Psoas muscle (tissue), 8 donors: ENCODE measurements at regions of chr6 and their contacts with region 1.

Region 1: GRCh38 chr6:117317261-117317660 is 51.9 kb downstream of the VGLL2 start:
- DNase-seq: no peak
- ATAC-seq: peak in 3 of 4 donors; percentile 75 to 88 (median 79)
- H3K4me3 ChIP-seq: no peak overlapping the region
- H3K27ac ChIP-seq: no peak overlapping the region
- H3K4me1 ChIP-seq: peaks cover 4% of the 10 kb centered on the region
- H3K27me3 ChIP-seq: no peaks in the 10 kb centered on the region
- CTCF ChIP-seq: peak; percentile 65

Region 2: DNA sequence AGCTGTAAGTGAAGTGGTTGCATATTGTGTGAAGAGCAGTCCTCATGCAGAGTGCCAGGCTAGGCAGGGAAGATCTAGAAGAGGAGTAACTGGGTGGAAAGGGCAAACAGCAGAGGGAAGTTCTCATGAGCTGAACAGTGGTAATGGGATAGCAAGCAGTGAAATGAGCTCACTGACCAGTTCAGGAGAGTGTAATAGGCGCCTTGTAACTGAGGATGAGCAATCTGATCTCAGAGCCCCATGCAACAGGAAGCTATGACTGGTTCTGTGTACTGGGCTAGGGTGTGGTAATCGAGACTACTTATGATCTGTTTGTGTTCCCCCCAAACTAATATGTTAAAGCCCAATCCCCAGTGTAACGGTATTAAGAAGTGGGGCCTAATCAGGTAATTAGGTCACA is 341.7 kb before region 1 on chr6:
- intact Hi-C with region 1: loop called (anchors 2 to 5 kb)
- DNase-seq: no peak
- ATAC-seq: peak; percentile 90 to 95 (median 92)
- H3K4me3 ChIP-seq: no peak overlapping the region
- H3K27ac ChIP-seq: peak overlapping the region; percentile 86
- H3K4me1 ChIP-seq: peaks cover 30% of the 10 kb centered on the region
- H3K27me3 ChIP-seq: no peaks in the 10 kb centered on the region
- CTCF ChIP-seq: no peak

Region 3: GRCh38 chr6:117194978-117195377 is 122.3 kb before region 1 on chr6:
- intact Hi-C with region 1: loop called in 1 of 2 experiments (anchors 5 kb)
- DNase-seq: no peak
- ATAC-seq: peak in 3 of 4 donors; percentile 45 to 61 (median 54)
- H3K4me3 ChIP-seq: no peak overlapping the region
- H3K27ac ChIP-seq: no peak overlapping the region
- H3K4me1 ChIP-seq: peaks cover 13% of the 10 kb centered on the region
- H3K27me3 ChIP-seq: no peaks in the 10 kb centered on the region
- CTCF ChIP-seq: no peak

Region 4: GRCh38 chr6:117280922-117281321 is 36.3 kb before region 1 on chr6:
- intact Hi-C with region 1: loop called (anchors 2 to 5 kb)
- DNase-seq: peak in 1 of 2 donors; percentile 41
- ATAC-seq: peak; percentile 44 to 81 (median 74)
- H3K4me3 ChIP-seq: no peak overlapping the region
- H3K27ac ChIP-seq: peak overlapping the region; percentile 25
- H3K4me1 ChIP-seq: peaks cover 11% of the 10 kb centered on the region
- H3K27me3 ChIP-seq: no peaks in the 10 kb centered on the region
- CTCF ChIP-seq: peak; percentile 28